Dorsolateral prefrontal cortex (tissue), 120 donors: ENCODE measurements at regions of chr4 and their contacts with region 1.

Region 1: GRCh38 chr4:77240469-77241066 is 83.6 kb downstream of the CCNG2 start:
- DNase-seq: peak; percentile 46 to 68 (median 64)
- H3K4me3 ChIP-seq: no peak overlapping the region
- H3K27ac ChIP-seq: no peak overlapping the region
- H3K27me3 ChIP-seq: peaks cover 0 to 6% (median 0%) of the 10 kb centered on the region in 45 donors
- CTCF ChIP-seq: peak in 55 of 56 donors; percentile 51 to 87 (median 73)

Region 2: DNA sequence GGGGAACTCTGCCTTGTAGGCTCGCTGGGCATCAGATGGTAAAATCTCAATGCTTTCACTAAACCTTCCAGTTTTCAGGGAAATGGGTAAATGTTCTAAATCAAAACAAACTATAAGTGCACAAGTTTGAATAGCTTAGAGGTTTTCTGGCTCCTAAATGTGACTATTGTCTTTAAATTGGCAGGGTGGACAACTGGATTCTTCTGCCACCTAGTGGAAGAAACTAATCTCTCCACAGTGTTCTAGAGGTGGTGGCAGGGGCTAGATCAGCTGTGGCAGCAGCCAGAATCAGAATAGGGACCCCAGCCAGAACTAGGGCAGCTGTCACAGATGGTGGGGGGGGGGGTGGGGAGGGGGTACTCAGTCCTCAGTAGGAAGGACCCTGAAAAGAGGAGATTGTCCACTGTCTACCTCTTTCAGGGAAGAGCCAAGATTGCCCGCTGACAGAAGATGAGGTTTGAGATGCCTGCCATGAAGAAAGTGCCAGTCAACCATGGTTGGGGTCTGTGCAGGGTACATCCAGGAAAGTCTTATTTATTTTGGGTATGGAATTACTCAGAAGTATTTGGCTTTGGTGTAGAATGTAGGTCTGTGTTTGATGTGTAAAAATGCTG is 117.9 kb after region 1 on chr4:
- intact Hi-C with region 1: loop called (anchors 1 to 5 kb)
- DNase-seq: peak in 2 of 10 donors; percentile 14 to 16
- H3K4me3 ChIP-seq: no peak overlapping the region
- H3K27ac ChIP-seq: no peak overlapping the region
- H3K27me3 ChIP-seq: peaks cover 0 to 7% (median 0%) of the 10 kb centered on the region in 45 donors
- CTCF ChIP-seq: peak; percentile 23 to 76 (median 65)

Region 3: DNA sequence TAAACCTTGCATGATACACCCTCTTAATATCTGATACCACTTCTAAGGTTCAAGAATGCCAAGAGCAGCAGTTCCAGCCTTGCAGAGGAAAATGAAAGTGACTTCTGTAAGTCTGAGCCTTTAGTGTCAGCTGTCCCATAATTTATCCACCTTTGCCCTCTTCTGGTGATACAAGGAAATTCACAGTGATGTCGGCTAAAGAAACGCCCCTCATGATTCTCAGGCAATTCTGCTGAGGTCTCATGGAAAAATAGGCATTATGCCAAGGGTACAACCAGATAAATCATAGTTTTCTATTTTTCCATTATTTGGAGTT is 192.8 kb after region 1 on chr4:
- intact Hi-C with region 1: loop called in 1 of 2 experiments (anchors 2 kb)
- DNase-seq: no peak
- H3K4me3 ChIP-seq: peak overlapping the region in 4 of 59 donors; percentile 3 to 16 (median 8)
- H3K27ac ChIP-seq: peak overlapping the region in 5 of 59 donors; percentile 3 to 47 (median 25)
- H3K27me3 ChIP-seq: no peaks in the 10 kb centered on the region
- CTCF ChIP-seq: peak; percentile 35 to 85 (median 68)

Region 4: DNA sequence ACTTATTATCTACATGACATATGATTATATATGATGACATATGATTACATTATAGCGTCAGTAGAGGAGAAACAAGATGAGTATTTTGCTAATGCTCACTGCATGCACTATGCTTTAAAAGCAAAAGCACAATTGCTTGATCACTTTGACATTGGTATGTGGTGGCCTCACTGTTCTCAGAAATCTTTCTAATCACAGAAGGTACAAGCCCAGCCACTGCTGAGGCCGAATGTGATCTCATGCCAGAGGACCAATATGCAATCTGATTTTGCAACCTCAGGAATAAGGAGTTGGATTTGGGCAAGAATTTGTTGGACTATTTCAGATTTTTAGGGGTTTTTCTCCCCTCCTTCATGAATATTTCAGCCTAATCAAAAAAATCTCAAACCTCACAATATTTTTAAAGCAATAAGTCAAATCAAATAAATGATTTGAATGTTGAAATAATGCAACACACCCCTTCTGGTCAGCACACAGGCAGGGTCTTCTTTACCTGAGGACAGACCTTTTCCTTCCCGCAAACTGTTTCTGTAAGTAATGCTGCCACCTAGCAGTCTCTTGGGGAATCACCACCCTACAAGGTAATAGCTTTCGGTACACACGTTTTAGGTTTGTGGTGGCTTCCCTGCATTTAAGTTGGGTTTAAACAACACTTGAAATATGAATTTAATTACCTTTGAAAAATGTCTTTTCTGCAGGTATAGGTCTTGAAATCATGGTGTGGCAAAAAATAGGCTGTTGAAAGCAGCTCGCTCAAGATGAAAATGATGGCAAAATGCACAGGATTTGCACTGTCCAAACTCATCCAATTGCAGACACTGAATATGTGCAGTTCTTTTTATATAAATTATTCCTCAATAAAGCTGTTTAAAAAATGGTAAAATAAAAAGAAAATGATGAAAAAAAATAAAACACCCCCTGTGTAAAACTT is 360.2 kb after region 1 on chr4:
- intact Hi-C with region 1: loop called in 1 of 2 experiments (anchors 10 kb)
- DNase-seq: peak in 1 of 10 donors; percentile 7
- H3K4me3 ChIP-seq: no peak overlapping the region
- H3K27ac ChIP-seq: no peak overlapping the region
- H3K27me3 ChIP-seq: peaks cover 0 to 7% (median 0%) of the 10 kb centered on the region in 45 donors
- CTCF ChIP-seq: peak; percentile 27 to 81 (median 68)